ENCODE measurements at regions of chr7 and their contacts with region 1.

Region 1: DNA sequence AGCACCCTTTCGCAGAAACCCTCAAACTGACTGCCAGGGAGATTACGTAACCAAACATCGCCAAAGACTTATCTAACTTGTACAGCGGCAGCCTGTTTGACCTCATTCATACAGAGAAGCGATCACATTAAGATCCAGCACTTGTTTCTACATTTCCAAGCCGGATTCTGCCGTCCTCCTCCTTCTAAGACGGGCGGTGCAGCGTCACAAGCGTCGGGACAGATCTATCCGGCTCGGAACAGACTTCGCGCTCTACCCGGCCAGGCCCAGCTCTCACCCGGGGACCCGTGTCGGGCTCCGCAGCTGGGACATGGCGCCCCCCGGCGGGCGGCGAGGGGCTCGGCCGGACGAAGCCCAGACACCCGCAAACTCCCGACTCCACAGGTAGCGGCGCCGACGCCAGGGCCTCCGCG is 373 bp downstream of the H2AZ2 start:
- DNase-seq: peak; percentile 87
- H3K4me3 Mint-ChIP-seq: peak overlapping the region; percentile 91
- H3K27ac Mint-ChIP-seq: peak overlapping the region; percentile 99
- H3K4me1 Mint-ChIP-seq: peaks cover 38% of the 10 kb centered on the region
- H3K27me3 Mint-ChIP-seq: no peaks in the 10 kb centered on the region

Region 2: GRCh38 chr7:44712012-44712411 is 135.5 kb before region 1 on chr7:
- CTCF ChIA-PET with region 1: no interaction called
- POLR2A ChIA-PET with region 1: no interaction called
- DNase-seq: no peak
- H3K4me3 Mint-ChIP-seq: no peak overlapping the region
- H3K27ac Mint-ChIP-seq: no peak overlapping the region
- H3K4me1 Mint-ChIP-seq: peaks cover 8% of the 10 kb centered on the region
- H3K27me3 Mint-ChIP-seq: no peaks in the 10 kb centered on the region

Region 3: DNA sequence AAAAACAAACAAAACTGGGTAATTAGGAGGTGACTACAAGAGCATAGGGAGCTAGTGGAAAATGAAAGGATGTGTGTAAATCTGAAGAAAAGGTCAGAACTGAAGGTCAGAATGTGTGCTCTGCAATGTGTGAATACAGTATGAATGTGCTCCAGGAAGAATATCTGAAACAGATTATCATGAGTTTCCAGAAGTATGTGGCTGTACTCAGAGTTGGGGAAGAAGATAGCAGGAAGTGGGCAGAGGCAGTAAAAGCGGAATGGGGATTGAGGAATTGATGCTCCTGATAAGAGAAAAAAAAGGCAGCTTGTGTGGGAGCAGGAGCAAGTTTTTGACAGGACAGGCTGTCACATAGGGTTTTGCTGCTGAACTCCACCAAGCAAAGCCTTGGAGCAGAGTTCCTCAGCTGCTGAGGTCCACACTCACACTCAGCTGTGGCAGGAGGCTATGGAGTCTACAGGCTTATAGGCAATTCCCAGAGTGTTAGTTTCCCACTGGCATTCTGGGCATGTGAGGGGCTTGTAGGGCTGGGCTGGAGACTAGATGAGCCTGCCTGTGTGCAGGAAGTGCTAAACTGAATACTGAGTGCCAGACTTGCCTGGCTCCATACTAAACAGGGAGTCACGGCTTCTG is 22.5 kb before region 1 on chr7:
- CTCF ChIA-PET with region 1: interaction called, 14 read pairs
- POLR2A ChIA-PET with region 1: no interaction called
- DNase-seq: no peak
- H3K4me3 Mint-ChIP-seq: no peak overlapping the region
- H3K27ac Mint-ChIP-seq: peak overlapping the region; percentile 37
- H3K4me1 Mint-ChIP-seq: peaks cover 18% of the 10 kb centered on the region
- H3K27me3 Mint-ChIP-seq: no peaks in the 10 kb centered on the region

Region 4: GRCh38 chr7:44858161-44858560 is 10.6 kb after region 1 on chr7:
- CTCF ChIA-PET with region 1: interaction called, 13 read pairs
- POLR2A ChIA-PET with region 1: no interaction called
- DNase-seq: no peak
- H3K4me3 Mint-ChIP-seq: no peak overlapping the region
- H3K27ac Mint-ChIP-seq: peak overlapping the region; percentile 60
- H3K4me1 Mint-ChIP-seq: peaks cover 15% of the 10 kb centered on the region
- H3K27me3 Mint-ChIP-seq: peaks cover 3% of the 10 kb centered on the region

Region 5: DNA sequence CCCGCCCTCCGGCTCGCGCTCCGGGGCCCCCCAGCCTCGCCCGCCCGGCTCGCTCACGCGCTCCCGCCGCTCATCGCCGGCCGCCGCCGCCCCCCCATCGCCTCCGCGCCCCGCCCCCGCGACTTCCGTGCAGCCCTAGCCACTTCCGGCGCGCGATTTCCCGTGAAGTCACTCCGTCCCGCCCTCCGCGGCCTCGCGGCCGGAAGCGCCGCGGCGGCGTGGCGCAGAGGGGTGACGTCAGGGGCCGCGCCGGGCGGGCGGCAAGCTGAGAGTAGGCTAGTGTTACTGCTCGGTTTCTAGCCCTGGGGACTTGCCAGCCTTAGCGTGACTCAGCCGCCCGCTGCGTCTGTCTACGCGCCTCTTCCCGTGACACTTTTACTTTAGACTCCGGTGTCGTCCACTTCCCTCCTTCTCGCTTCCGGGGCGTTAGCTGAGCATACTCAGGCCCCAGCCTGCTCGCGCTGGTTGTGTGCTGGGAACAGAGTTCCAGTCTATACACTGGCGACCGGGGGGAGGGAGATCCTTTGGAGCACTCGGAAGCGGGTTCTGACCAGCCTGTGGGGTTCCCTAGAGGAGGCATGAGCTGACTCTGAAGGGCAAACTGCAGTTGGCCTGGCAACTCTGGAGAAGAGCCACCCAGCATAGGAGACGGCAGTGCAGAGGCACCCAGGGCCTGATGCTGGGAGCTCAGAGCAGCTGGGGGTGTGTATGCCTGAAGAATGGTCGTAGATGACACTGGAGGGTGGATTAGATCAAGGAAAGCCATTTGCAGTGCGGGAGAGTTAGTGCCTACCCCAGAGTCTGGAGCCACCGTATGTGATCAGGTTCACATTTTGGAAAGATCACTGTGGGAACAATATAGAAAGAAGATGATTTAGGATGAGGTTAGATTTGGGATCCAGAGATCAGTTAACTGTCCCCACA is 38.1 kb after region 1 on chr7 and contains the start of gene PURB:
- CTCF ChIA-PET with region 1: interaction called, 14 read pairs
- POLR2A ChIA-PET with region 1: interaction called, 4 read pairs
- DNase-seq: peak; percentile 95
- H3K4me3 Mint-ChIP-seq: peak within 1 kb of the TSS; percentile 90
- H3K27ac Mint-ChIP-seq: peak within 1 kb of the TSS; percentile 99
- H3K4me1 Mint-ChIP-seq: peaks cover 71% of the 10 kb centered on the region
- H3K27me3 Mint-ChIP-seq: no peaks in the 10 kb centered on the region
- total RNA-seq, gene PURB: 22.9 to 24.1 TPM

Measured in activated CD4-positive, alpha-beta T cell treated with anti-CD3 and anti-CD28 coated beads, Interleukin-2, amount 10 ng/mL, durations not matched to agents 7 days and 5 days (primary cell).